Ascending aorta (tissue), 2 donors: ENCODE measurements at regions of chr7 and their contacts with region 1.

Region 1: GRCh38 chr7:134986363-134987251 is at the start of gene AGBL3:
- DNase-seq: peak; percentile 89 to 99
- H3K4me3 ChIP-seq: peak within 1 kb of the TSS; percentile 72 to 73
- H3K27ac ChIP-seq: peak within 1 kb of the TSS; percentile 86 to 87
- H3K4me1 ChIP-seq: peaks cover 0 to 18% of the 10 kb centered on the region in 2 donors
- H3K27me3 ChIP-seq: no peaks in the 10 kb centered on the region
- CTCF ChIP-seq: peak; percentile 51 to 74 (median 67)
- total RNA-seq, gene AGBL3: 2.8 TPM

Region 2: GRCh38 chr7:134845468-134845867 is 141.1 kb before region 1 on chr7:
- intact Hi-C with region 1: no loop called
- DNase-seq: no peak
- H3K4me3 ChIP-seq: no peak overlapping the region
- H3K27ac ChIP-seq: peak overlapping the region; percentile 58 to 77
- H3K4me1 ChIP-seq: peaks cover 17 to 70% of the 10 kb centered on the region in 2 donors
- H3K27me3 ChIP-seq: no peaks in the 10 kb centered on the region
- CTCF ChIP-seq: no peak

Region 3: DNA sequence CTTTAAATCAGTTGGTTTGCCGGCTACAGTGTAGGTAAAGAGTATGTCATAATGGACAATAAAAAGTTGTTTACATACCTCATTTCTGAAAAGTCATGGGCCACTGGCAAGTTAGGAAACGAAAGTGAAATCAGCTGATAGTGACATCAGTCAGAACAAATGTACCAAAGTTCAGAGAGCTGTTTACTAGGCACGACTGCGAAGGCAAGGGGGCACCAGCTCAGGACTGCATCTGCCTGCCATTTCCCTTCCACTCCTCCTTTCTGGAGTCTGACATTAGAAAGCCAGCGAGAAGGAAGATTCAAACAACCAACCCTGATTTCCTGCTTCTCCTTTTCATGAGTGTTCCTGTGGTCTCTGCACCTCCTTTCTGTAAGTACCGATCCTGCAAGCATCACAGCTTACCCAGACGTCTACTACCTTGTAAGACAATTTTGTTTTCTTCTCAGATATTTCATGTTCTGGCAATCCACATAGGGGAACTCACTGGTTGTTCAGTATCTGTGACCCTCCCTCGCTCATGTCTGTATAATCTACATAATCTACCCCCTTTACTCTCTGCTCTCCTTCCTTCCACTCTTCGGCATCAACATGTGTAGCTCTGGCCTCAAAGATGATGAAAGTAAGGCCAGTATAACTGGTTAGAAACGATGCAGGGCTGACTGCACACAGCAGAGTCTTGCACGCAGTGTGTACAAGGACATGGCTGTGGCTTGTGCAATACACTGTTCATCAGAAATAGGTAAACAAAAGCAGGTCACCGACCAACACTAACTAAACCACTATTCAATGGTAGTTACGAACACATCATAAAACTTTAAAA is 161.5 kb after region 1 on chr7 and contains the start of gene TMEM140:
- intact Hi-C with region 1: loop called (anchors 5 kb)
- DNase-seq: no peak
- H3K4me3 ChIP-seq: peak within 1 kb of the TSS; percentile 63 to 65
- H3K27ac ChIP-seq: peak within 1 kb of the TSS; percentile 94
- H3K4me1 ChIP-seq: peaks cover 4 to 24% of the 10 kb centered on the region in 2 donors
- H3K27me3 ChIP-seq: no peaks in the 10 kb centered on the region
- CTCF ChIP-seq: peak in 1 of 3 experiments; percentile 7
- total RNA-seq, gene TMEM140: 26.9 TPM

Region 4: DNA sequence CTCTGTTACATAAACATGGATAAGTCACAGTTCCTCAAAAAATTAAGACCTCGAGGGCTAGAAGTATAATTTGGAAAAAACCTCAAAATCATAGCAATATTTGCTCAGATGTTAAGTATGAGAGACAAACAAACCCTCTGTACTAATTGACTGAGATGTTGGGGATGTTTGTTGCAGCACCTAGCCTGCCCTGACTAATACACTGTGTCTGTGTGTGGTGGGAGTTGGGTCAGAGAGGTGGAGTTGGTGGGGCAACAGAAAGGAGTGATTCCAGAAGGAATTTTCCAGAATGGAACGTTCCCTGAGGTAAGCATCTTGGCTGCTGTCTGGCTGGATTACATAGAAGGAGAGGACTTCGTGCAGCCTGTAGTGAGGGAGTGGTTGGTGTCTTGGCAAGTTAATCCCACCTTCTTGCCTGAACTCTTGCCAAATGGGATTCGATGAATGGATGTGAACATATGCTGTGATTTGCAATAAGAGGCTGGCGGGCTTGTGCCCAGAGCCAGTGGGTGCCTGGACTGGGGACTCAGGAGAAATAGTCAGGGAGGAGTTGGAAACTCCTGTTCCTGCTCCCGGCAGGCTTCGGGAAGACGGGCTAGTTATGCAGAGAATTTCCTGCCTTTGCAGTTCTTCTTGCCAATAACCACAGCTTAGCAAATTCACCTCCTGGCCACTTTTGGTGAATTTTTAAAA is 771.3 kb after region 1 on chr7:
- intact Hi-C with region 1: loop called (anchors 5 kb)
- DNase-seq: peak in 1 of 2 donors; percentile 90
- H3K4me3 ChIP-seq: peak overlapping the region in 1 of 2 donors; percentile 54
- H3K27ac ChIP-seq: peak overlapping the region; percentile 93 to 97
- H3K4me1 ChIP-seq: peaks cover 12 to 57% of the 10 kb centered on the region in 2 donors
- H3K27me3 ChIP-seq: no peaks in the 10 kb centered on the region
- CTCF ChIP-seq: no peak